CD8-positive, alpha-beta T cell (primary cell): ENCODE measurements at regions of chr2 and their contacts with region 1.

Region 1: DNA sequence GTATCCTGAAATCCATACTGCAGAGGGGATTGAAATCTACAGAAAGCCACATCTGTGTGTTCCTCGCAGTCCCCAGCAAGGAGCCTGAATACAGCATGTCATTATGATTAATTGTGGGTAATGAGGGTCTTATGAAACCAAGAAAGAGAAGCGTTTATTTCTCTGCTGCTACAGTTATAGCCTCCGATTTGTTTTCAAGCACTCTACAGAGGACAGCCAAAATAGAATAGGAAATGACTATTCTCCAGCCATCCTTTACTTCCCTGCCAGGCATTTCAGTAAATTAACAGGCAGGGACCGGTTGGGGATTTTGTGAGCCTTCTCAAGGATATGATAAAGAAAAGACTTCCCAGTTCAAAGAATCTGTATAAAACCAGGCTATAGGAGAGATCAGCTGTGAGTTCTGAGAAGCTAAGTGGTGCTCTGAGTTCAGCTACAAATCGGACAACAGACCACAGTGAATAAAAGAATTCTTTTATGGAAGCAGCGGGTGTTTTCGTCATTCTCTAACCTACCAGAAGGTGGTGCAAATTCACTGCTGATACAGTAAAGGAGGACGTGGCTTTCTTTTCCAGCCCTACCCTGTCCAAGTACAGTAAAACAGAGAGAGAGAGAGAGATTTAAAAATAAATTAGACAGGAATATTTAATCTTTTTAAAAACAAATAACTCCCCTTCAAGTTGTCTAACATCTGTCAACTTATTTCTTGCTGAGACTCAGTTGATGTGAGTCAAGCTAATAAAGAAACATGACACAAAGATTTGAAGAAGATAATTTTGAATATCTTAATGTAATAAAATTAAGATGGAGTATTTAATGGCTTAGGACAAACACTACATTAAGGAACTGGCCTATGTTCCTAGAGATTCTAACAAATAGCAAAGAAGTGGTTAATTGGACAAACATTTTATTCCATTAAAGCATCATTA is 133.7 kb downstream of the INSIG2 start:
- DNase-seq: peak in 6 of 9 experiments; percentile 4 to 76 (median 32)
- ATAC-seq: peak; percentile 68
- H3K4me3 ChIP-seq: no peak overlapping the region
- H3K4me3 Mint-ChIP-seq: no peak overlapping the region
- H3K27ac ChIP-seq: no peak overlapping the region
- H3K27ac Mint-ChIP-seq: no peak overlapping the region
- H3K4me1 ChIP-seq: peaks cover 16% of the 10 kb centered on the region
- H3K4me1 Mint-ChIP-seq: peaks cover 19% of the 10 kb centered on the region
- H3K27me3 ChIP-seq: peaks cover 28 to 31% of the 10 kb centered on the region in 2 experiments
- H3K27me3 Mint-ChIP-seq: peaks cover 63% of the 10 kb centered on the region
- CTCF ChIP-seq: peak; percentile 80

Region 2: DNA sequence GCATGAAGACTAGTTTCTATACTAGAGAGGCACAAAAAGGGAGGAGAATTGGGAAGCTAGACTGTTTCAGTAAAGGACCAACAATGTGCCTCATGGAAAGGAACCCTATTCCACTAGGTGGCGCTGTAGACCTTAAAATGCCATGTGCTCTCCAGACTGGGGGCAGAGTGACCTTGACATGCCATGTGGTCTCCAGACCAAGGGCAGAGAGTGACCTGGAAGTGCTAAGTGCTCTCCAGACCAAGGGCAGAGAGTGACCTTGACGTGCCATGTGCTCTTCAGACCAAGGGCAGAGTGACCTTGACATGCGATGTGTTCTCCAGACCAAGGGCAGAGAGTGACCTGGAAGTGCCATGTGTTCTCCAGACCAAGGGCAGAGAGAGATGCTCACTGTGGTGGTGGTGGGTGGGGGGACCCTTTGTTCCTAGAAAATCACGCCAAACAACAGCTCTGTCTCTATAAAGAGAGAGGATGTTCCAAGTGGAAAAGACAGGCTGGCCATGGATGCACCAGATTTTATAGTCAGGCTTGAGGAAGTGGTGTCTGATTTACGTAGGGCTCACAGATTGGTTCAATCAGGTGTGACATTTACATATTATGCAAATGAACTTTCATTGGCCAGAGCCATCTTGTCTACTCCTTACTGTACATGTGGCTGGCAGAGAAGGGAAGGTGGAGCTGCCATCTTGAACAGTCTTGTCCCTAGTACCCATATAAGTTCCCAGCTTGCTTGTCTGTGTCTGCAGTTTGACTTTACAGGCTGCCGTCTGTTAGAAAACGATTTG is 751.4 kb before region 1 on chr2:
- CTCF ChIA-PET with region 1: no interaction called
- POLR2A ChIA-PET with region 1: no interaction called
- intact Hi-C with region 1: no loop called
- DNase-seq: peak in 3 of 9 experiments; percentile 2 to 29 (median 16)
- ATAC-seq: no peak
- H3K4me3 ChIP-seq: no peak overlapping the region
- H3K4me3 Mint-ChIP-seq: no peak overlapping the region
- H3K27ac ChIP-seq: no peak overlapping the region
- H3K27ac Mint-ChIP-seq: no peak overlapping the region
- H3K4me1 ChIP-seq: no peaks in the 10 kb centered on the region
- H3K4me1 Mint-ChIP-seq: no peaks in the 10 kb centered on the region
- H3K27me3 ChIP-seq: no peaks in the 10 kb centered on the region
- H3K27me3 Mint-ChIP-seq: no peaks in the 10 kb centered on the region
- CTCF ChIP-seq: no peak

Region 3: GRCh38 chr2:118046634-118047210 is 175.2 kb before region 1 on chr2:
- CTCF ChIA-PET with region 1: interaction called, 4 read pairs
- POLR2A ChIA-PET with region 1: no interaction called
- intact Hi-C with region 1: loop called in 1 of 2 experiments (anchors 5 kb)
- DNase-seq: peak in 2 of 9 experiments; percentile 36 to 53
- ATAC-seq: no peak
- H3K4me3 ChIP-seq: no peak overlapping the region
- H3K4me3 Mint-ChIP-seq: no peak overlapping the region
- H3K27ac ChIP-seq: no peak overlapping the region
- H3K27ac Mint-ChIP-seq: no peak overlapping the region
- H3K4me1 ChIP-seq: no peaks in the 10 kb centered on the region
- H3K4me1 Mint-ChIP-seq: no peaks in the 10 kb centered on the region
- H3K27me3 ChIP-seq: peaks cover 0 to 3% of the 10 kb centered on the region in 2 experiments
- H3K27me3 Mint-ChIP-seq: peaks cover 44% of the 10 kb centered on the region
- CTCF ChIP-seq: peak; percentile 73

Region 4: GRCh38 chr2:118169359-118170007 is 52.4 kb before region 1 on chr2:
- CTCF ChIA-PET with region 1: no interaction called
- POLR2A ChIA-PET with region 1: no interaction called
- intact Hi-C with region 1: no loop called
- DNase-seq: peak in 6 of 9 experiments; percentile 3 to 60 (median 22)
- ATAC-seq: peak; percentile 55
- H3K4me3 ChIP-seq: no peak overlapping the region
- H3K4me3 Mint-ChIP-seq: peak overlapping the region; percentile 9
- H3K27ac ChIP-seq: no peak overlapping the region
- H3K27ac Mint-ChIP-seq: peak overlapping the region; percentile 15
- H3K4me1 ChIP-seq: peaks cover 15% of the 10 kb centered on the region
- H3K4me1 Mint-ChIP-seq: no peaks in the 10 kb centered on the region
- H3K27me3 ChIP-seq: no peaks in the 10 kb centered on the region
- H3K27me3 Mint-ChIP-seq: peaks cover 3% of the 10 kb centered on the region
- CTCF ChIP-seq: no peak

Region 5: GRCh38 chr2:118207889-118208288 is 14.0 kb before region 1 on chr2:
- CTCF ChIA-PET with region 1: interaction called, 12 read pairs
- POLR2A ChIA-PET with region 1: no interaction called
- intact Hi-C with region 1: no loop called
- DNase-seq: no peak
- ATAC-seq: no peak
- H3K4me3 ChIP-seq: no peak overlapping the region
- H3K4me3 Mint-ChIP-seq: no peak overlapping the region
- H3K27ac ChIP-seq: no peak overlapping the region
- H3K27ac Mint-ChIP-seq: no peak overlapping the region
- H3K4me1 ChIP-seq: no peaks in the 10 kb centered on the region
- H3K4me1 Mint-ChIP-seq: peaks cover 3% of the 10 kb centered on the region
- H3K27me3 ChIP-seq: peaks cover 0 to 3% of the 10 kb centered on the region in 2 experiments
- H3K27me3 Mint-ChIP-seq: peaks cover 50% of the 10 kb centered on the region
- CTCF ChIP-seq: no peak

Region 6: DNA sequence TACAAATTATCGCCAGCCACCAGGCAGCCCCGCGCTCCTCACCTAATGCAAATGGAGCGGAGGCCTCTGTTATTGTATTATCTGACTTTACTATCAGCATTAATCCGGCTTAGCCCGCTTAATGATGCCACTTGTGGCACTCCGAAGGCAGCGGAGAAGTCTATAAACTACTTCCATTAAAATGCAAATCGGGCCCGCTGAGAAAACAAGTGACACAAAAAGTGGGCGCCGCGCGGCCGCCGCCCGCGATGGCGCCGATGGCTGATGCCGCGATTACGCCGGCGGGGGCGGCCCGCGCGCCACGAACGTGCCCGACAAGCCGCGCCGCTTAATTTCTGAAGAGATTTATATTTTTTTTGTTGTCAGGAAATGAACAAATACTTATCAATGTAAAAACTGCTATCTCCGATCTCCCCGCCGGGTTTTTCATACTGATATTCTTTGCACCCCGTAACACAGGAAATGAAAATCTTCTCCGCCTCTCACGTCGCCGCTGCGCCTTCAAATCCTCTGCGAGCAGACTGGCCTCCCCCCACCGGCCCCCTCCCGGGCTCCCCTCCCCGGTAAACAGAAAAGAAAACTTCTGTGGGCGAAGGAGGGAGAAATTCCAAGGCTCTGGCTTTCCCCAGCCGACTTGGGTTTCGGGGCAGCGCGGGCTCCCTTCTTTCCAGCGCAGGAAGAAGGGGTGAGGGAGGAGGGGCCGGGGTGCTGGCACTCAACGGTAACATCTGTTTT is 88.2 kb after region 1 on chr2:
- CTCF ChIA-PET with region 1: no interaction called
- POLR2A ChIA-PET with region 1: interaction called, 3 read pairs
- intact Hi-C with region 1: loop called in 1 of 2 experiments (anchors 5 kb)
- DNase-seq: peak; percentile 22 to 77 (median 56)
- ATAC-seq: peak; percentile 75
- H3K4me3 ChIP-seq: peak overlapping the region; percentile 66 to 69
- H3K4me3 Mint-ChIP-seq: peak overlapping the region; percentile 88
- H3K27ac ChIP-seq: peak overlapping the region; percentile 81 to 88
- H3K27ac Mint-ChIP-seq: peak overlapping the region; percentile 97
- H3K4me1 ChIP-seq: peaks cover 8% of the 10 kb centered on the region
- H3K4me1 Mint-ChIP-seq: peaks cover 5% of the 10 kb centered on the region
- H3K27me3 ChIP-seq: no peaks in the 10 kb centered on the region
- H3K27me3 Mint-ChIP-seq: peaks cover 4% of the 10 kb centered on the region
- CTCF ChIP-seq: no peak

Region 7: DNA sequence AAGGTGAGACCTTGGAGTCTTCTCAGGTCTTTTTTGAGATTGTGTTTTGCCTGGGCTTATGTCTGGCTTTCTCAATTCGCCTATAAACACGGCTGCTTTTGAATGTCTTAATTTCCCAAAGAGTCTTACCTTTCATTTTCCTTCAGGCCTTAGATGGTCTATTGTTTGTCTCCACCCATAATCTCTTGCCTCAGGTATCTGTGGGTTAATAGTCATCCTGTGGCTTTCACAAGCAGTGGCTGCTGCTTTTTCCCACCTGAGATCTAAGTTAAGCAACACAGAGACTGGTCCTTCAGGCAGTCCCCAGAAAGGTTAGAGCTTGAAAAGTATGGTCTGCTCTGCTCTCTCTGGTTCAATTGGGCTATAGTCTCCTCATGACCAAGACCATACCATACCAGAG is 141.7 kb after region 1 on chr2:
- CTCF ChIA-PET with region 1: no interaction called
- POLR2A ChIA-PET with region 1: no interaction called
- intact Hi-C with region 1: no loop called
- DNase-seq: no peak
- ATAC-seq: no peak
- H3K4me3 ChIP-seq: no peak overlapping the region
- H3K4me3 Mint-ChIP-seq: no peak overlapping the region
- H3K27ac ChIP-seq: no peak overlapping the region
- H3K27ac Mint-ChIP-seq: no peak overlapping the region
- H3K4me1 ChIP-seq: no peaks in the 10 kb centered on the region
- H3K4me1 Mint-ChIP-seq: no peaks in the 10 kb centered on the region
- H3K27me3 ChIP-seq: peaks cover 0 to 2% of the 10 kb centered on the region in 2 experiments
- H3K27me3 Mint-ChIP-seq: peaks cover 19% of the 10 kb centered on the region
- CTCF ChIP-seq: no peak

Region 8: DNA sequence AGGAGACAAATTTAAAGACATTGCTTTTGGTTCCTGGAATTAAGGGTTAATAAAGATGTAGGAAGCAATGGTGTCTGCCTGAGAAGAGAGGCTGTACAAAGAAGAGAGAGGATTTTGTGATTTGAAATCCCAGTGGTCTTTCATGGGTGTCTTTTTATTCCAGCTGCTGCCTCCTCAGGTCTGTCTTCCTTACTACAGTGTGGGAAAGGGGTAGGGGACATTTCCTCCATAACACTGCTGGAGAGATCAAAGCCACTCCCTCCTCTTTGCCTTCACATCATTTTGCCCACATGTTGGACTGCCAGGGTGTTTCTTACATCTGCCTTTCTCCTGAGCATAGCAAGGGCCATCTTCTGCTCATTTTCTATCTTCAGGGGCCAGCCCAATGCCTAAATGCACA is 277.0 kb after region 1 on chr2:
- CTCF ChIA-PET with region 1: no interaction called
- POLR2A ChIA-PET with region 1: no interaction called
- intact Hi-C with region 1: no loop called
- DNase-seq: no peak
- ATAC-seq: no peak
- H3K4me3 ChIP-seq: no peak overlapping the region
- H3K4me3 Mint-ChIP-seq: no peak overlapping the region
- H3K27ac ChIP-seq: no peak overlapping the region
- H3K27ac Mint-ChIP-seq: no peak overlapping the region
- H3K4me1 ChIP-seq: no peaks in the 10 kb centered on the region
- H3K4me1 Mint-ChIP-seq: no peaks in the 10 kb centered on the region
- H3K27me3 ChIP-seq: no peaks in the 10 kb centered on the region
- H3K27me3 Mint-ChIP-seq: peaks cover 7% of the 10 kb centered on the region
- CTCF ChIP-seq: no peak

Region 9: DNA sequence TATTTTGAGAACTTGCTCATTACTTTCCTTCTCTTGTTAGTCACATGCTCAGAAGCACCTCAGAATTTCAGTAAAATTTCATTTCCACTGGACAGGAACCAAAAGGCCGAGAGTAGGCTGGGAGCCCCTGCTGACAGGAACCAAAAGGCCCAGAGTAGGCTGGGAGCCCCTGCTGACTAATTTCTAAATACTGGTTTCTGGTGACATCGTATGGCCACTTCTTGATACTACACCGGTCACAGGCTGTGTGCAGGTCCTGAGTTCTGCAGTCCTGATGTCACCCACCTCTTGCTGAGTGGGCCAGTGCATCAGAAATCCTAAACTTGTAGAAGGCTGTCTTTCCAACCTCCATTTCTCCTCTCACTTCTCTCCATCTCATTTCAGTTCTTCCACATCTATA is 643.2 kb after region 1 on chr2:
- CTCF ChIA-PET with region 1: interaction called, 9 read pairs
- POLR2A ChIA-PET with region 1: no interaction called
- intact Hi-C with region 1: loop called (anchors 2 kb)
- DNase-seq: peak in 2 of 9 experiments; percentile 45 to 55
- ATAC-seq: peak; percentile 55
- H3K4me3 ChIP-seq: no peak overlapping the region
- H3K4me3 Mint-ChIP-seq: no peak overlapping the region
- H3K27ac ChIP-seq: no peak overlapping the region
- H3K27ac Mint-ChIP-seq: no peak overlapping the region
- H3K4me1 ChIP-seq: no peaks in the 10 kb centered on the region
- H3K4me1 Mint-ChIP-seq: no peaks in the 10 kb centered on the region
- H3K27me3 ChIP-seq: peaks cover 0 to under 1% of the 10 kb centered on the region in 2 experiments
- H3K27me3 Mint-ChIP-seq: peaks cover 34% of the 10 kb centered on the region
- CTCF ChIP-seq: peak; percentile 31

Region 10: DNA sequence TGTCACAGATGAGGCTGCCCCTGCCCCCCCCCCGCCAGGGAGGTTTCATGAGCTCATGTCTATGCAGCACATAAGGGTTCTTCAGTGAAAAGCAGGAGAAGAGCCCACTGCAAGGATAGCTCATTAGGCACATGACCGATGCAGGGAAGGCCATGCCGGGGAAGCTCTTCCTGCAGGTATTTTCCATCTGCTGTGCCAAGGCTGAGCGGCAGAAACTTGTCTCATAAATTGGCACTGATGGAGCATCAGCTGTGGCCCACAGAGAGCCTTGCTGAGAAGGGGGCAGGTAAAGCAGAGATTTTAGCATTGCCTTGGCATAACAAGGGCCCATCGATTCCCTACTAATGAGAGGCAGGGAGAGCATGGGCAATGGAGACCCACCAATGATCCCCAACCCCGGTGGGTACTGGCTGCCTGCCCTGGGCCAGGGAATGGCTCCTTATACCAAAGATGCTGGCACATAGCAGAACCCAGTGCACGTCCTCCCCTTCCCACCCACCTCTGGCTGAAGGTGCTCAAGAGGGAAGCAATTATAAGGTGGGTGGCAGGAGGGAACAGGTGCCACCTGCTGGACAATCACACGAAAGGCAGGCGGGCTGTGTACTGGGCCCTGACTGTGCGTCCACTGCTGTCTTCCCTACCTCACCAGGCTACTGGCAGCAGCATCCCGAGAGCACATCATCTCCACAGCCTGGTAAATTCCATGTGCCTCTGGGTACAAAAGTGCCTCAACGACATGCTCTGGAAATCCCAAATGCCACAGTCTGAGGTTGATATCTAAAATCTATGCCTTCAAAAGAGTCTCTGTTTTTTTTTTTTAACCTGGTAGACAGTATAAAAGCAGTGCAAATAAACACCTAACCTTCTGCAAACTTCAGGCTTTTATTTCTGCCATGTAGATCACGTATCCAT is 1043.1 kb after region 1 on chr2:
- CTCF ChIA-PET with region 1: no interaction called
- POLR2A ChIA-PET with region 1: no interaction called
- intact Hi-C with region 1: loop called in 1 of 2 experiments (anchors 5 kb)
- DNase-seq: peak in 5 of 9 experiments; percentile 15 to 59 (median 27)
- ATAC-seq: no peak
- H3K4me3 ChIP-seq: no peak overlapping the region
- H3K4me3 Mint-ChIP-seq: no peak overlapping the region
- H3K27ac ChIP-seq: no peak overlapping the region
- H3K27ac Mint-ChIP-seq: no peak overlapping the region
- H3K4me1 ChIP-seq: no peaks in the 10 kb centered on the region
- H3K4me1 Mint-ChIP-seq: no peaks in the 10 kb centered on the region
- H3K27me3 ChIP-seq: no peaks in the 10 kb centered on the region
- H3K27me3 Mint-ChIP-seq: peaks cover 7% of the 10 kb centered on the region
- CTCF ChIP-seq: peak; percentile 32

Region 11: GRCh38 chr2:119659601-119660342 is 1437.8 kb after region 1 on chr2:
- CTCF ChIA-PET with region 1: interaction called, 4 read pairs
- POLR2A ChIA-PET with region 1: no interaction called
- intact Hi-C with region 1: loop called (anchors 5 kb)
- DNase-seq: peak in 4 of 9 experiments; percentile 37 to 60 (median 45)
- ATAC-seq: no peak
- H3K4me3 ChIP-seq: no peak overlapping the region
- H3K4me3 Mint-ChIP-seq: no peak overlapping the region
- H3K27ac ChIP-seq: no peak overlapping the region
- H3K27ac Mint-ChIP-seq: no peak overlapping the region
- H3K4me1 ChIP-seq: no peaks in the 10 kb centered on the region
- H3K4me1 Mint-ChIP-seq: peaks cover 2% of the 10 kb centered on the region
- H3K27me3 ChIP-seq: no peaks in the 10 kb centered on the region
- H3K27me3 Mint-ChIP-seq: peaks cover 7% of the 10 kb centered on the region
- CTCF ChIP-seq: peak; percentile 76